AG04449 (cell line): ENCODE measurements at regions of chrX and their contacts with region 1.

Region 1: GRCh38 chrX:10189317-10190268 is 32.8 kb downstream of the CLCN4 start:
- DNase-seq: no peak
- H3K4me3 ChIP-seq: no peak overlapping the region
- CTCF ChIP-seq: peak; percentile 56

Region 2: GRCh38 chrX:10089378-10089812 is 100.2 kb before region 1 on chrX:
- CTCF ChIA-PET with region 1: no interaction called
- POLR2A ChIA-PET with region 1: no interaction called
- DNase-seq: no peak
- H3K4me3 ChIP-seq: no peak overlapping the region
- CTCF ChIP-seq: no peak

Region 3: DNA sequence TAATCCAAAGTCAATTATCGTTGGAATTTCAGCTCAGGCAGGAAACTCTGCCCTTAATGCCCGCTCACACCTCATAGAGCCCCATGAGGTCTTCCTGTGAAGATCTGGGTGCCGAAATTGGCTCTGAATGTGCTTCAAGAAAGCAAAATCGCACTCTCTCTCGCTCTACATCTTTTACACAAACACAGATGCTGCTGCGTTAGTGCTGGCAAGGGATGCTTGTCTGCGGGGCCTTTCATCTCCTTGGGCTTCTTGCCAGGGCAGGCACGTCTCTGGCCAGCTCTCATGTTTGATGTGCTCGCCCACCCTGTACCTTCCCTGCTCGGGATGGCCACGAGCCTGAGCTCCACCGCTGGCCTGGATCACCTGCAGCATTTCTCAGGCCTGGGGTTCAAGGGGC is 33.7 kb after region 1 on chrX:
- CTCF ChIA-PET with region 1: no interaction called
- POLR2A ChIA-PET with region 1: no interaction called
- DNase-seq: no peak
- H3K4me3 ChIP-seq: no peak overlapping the region
- CTCF ChIP-seq: no peak

Region 4: GRCh38 chrX:10326578-10326977 is 137.0 kb after region 1 on chrX:
- CTCF ChIA-PET with region 1: interaction called, 14 read pairs
- POLR2A ChIA-PET with region 1: no interaction called
- DNase-seq: no peak
- H3K4me3 ChIP-seq: no peak overlapping the region
- CTCF ChIP-seq: peak; percentile 39

Region 5: DNA sequence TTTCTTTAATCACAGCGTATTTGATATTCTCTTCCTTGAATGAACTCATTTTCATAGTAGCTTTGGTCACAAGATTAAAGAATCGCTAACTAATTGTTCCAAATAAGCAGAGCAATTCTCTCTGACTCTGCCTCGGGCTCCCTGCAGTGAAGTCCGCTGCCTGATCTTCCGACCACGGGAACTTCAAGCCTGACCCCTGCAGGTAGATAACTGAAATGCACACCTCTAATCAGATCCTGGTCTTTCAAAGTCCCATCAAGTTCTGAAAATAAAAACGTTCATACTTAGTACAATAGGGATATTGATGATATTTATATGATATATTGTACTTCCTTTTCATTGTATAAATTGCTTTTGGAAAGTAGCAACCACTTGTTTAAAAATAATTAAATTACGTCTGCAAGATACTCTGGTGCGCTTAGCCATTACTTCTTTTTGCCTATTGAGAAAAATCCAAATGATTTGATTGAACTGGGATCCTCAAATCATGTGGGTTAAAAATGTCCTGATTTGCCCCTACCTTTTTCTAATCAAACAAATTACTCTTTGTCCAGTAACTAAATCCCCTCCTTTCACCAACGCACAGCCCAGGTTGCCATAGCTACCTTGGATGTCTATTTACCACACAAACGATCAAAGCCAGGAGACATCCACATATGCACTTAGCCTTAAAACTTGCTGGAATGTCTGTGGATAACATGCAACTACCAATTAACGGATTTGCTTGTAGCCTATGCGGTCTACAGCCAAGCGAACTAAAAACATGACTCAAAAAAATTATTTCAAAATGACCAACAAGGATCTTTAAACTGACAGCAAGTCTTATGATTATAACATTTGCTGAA is 426.6 kb after region 1 on chrX:
- CTCF ChIA-PET with region 1: interaction called, 47 read pairs
- POLR2A ChIA-PET with region 1: no interaction called
- DNase-seq: no peak
- H3K4me3 ChIP-seq: no peak overlapping the region
- CTCF ChIP-seq: peak; percentile 46

Region 6: GRCh38 chrX:10648614-10649013 is 459.0 kb after region 1 on chrX:
- CTCF ChIA-PET with region 1: interaction called, 12 read pairs
- POLR2A ChIA-PET with region 1: no interaction called
- DNase-seq: no peak
- H3K4me3 ChIP-seq: no peak overlapping the region
- CTCF ChIP-seq: no peak

Region 7: DNA sequence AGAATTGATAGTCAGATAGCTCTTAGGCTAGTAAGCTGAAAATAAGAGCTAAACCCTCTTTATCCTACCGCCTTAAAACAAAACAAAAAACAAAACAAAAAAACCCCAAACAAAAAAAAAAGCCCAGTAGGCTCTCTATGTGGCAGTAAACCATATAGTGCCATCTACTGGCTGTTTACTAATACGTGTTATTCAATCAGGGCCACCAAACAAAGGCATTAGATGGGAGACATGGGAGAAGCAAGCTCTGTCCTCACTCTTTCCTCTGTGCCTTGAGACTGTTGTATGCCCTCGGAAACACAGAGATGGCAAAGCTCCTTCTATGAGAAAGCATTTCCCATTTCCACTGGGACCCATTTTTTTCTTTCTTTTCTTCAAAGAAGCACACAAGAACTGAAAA is 579.6 kb after region 1 on chrX:
- CTCF ChIA-PET with region 1: interaction called, 12 read pairs
- POLR2A ChIA-PET with region 1: no interaction called
- DNase-seq: no peak
- H3K4me3 ChIP-seq: no peak overlapping the region
- CTCF ChIP-seq: peak; percentile 17

Region 8: DNA sequence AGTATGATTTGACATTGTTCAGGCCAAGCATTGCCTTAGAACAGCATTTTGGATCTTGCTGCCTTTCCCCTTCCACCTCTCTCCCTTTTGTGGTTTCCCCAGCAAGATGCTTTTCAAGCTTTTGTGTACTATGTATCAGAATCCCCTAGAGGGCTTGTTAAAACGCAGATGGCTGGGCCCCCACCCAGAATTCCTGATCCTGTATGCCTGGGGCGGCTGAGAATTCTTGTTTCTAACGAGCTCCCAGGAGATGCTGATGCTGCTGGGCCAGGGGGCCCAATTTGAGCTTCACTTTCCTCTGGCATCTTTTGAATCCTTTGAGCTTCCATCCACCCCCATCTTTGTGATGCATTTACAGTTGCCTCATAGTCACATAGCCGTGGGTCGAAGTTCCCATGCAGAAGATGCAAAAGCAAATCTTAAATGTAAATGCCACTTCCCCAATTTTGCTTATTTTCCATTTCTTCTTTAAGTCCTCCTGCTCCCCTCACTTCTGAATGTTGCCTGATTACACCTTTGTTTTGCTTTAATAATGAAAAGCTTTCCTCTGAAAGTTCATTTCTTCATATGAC is 940.0 kb after region 1 on chrX:
- CTCF ChIA-PET with region 1: interaction called, 113 read pairs
- POLR2A ChIA-PET with region 1: no interaction called
- DNase-seq: no peak
- H3K4me3 ChIP-seq: no peak overlapping the region
- CTCF ChIP-seq: no peak

Region 9: DNA sequence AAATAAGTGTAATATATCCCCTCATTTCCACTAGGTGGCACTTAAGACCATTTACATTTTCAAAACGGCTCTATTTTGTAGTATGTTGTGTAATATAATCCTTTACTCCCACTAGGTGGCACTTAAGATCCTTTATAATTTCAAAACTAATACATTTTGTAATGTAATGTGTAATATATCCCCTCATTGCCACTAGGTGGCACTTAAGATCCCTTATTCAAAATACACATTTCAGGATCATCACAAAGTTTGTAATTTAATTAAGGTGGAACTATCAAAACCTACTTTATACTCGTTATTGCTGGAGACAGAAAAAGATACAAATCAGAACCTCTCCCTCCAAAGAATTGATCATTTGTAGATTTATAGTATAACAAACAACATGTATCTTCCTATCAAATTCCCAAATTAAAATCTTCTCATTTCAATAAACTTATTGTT is 1343.6 kb after region 1 on chrX:
- CTCF ChIA-PET with region 1: interaction called, 13 read pairs
- POLR2A ChIA-PET with region 1: no interaction called
- DNase-seq: peak; percentile 33
- H3K4me3 ChIP-seq: no peak overlapping the region
- CTCF ChIP-seq: peak; percentile 14